ENCODE measurements at regions of chr3 and their contacts with region 1.

Region 1: GRCh38 chr3:166291186-166291959 is 454.1 kb upstream of the BCHE start:
- DNase-seq: peak; percentile 15 to 54
- H3K4me3 ChIP-seq: no peak overlapping the region
- H3K27ac ChIP-seq: no peak overlapping the region
- H3K4me1 ChIP-seq: no peaks in the 10 kb centered on the region
- H3K27me3 ChIP-seq: no peaks in the 10 kb centered on the region
- CTCF ChIP-seq: peak; percentile 42 to 53 (median 50); a peak in 3 of 4 replicates
- EP300 ChIP-seq: no peak
- POLR2A ChIP-seq: no peak
- RAD21 ChIP-seq: peak; percentile 6 to 46; a peak in 2 of 4 replicates

Region 2: DNA sequence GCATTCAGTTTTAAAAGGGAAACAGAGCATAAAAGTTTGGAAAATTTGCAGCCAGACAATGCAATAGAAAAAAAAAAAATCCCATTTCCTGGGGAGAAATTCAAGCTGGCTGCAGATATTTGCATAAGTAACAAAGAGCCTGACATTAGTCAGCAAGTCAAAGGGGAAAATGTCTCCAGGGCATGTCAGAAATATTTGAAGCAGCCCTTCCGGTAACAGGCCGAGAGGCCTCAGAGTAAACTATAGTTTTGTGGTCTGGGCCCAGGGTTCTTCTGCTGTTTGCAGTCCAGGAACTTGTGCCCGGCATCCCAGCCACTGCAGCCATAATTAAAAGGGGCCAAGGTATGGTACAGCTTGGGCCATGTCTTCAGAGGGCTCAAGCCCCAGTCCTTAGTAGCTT is 42.6 kb before region 1 on chr3:
- CTCF ChIA-PET with region 1: no interaction called
- POLR2A ChIA-PET with region 1: no interaction called
- DNase-seq: no peak
- H3K4me3 ChIP-seq: no peak overlapping the region
- H3K27ac ChIP-seq: no peak overlapping the region
- H3K4me1 ChIP-seq: no peaks in the 10 kb centered on the region
- H3K27me3 ChIP-seq: no peaks in the 10 kb centered on the region
- CTCF ChIP-seq: no peak
- EP300 ChIP-seq: no peak
- POLR2A ChIP-seq: no peak
- RAD21 ChIP-seq: no peak

Region 3: GRCh38 chr3:166304556-166304955 is 13.2 kb after region 1 on chr3:
- CTCF ChIA-PET with region 1: interaction called, 11 read pairs
- POLR2A ChIA-PET with region 1: no interaction called
- DNase-seq: no peak
- H3K4me3 ChIP-seq: no peak overlapping the region
- H3K27ac ChIP-seq: no peak overlapping the region
- H3K4me1 ChIP-seq: peaks cover 0 to 3% (median 0%) of the 10 kb centered on the region in 4 experiments; a peak in 1 of 7 replicates
- H3K27me3 ChIP-seq: no peaks in the 10 kb centered on the region
- CTCF ChIP-seq: no peak; a peak in 1 of 4 replicates
- EP300 ChIP-seq: no peak
- POLR2A ChIP-seq: no peak
- RAD21 ChIP-seq: peak in 1 of 2 experiments; percentile 18; a peak in 2 of 4 replicates